ENCODE measurements at regions of chr2 and their contacts with region 1.

Region 1: DNA sequence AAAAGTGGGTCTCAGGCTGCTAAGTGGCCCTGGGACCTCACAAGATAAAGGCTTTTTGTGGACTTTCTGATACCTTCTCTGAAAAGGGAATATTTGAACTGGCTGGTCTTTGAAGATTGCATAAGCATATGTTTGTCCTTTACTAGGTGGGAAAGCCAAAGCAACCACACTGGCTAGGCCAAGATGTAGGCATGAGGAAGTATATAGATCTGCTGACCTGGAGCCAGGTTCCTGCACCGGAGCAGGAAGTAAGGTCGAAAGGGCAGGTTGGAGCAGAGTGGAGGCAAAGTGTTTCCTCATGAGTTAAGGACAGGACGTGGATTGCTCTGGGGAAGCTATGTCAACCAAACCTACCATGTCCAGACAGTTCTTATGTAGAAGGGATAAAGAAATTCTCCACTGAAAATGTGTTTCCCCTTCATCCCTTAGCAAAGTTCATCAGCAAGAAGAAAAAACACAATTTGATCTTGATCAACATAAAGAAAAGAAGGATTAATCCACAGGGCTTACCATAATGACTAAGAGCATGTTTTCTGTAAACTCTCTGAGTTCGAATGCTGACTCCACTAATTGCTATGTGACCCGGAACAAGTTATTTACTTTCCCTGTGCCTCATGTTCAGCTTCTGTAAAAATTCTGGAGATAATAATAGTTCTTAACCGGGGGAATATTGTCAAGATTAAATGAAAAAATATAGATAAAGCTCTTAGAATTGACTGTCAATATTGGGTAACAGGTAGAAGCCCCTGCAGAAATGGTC is 156.1 kb upstream of the SRD5A2 start:
- DNase-seq: no peak
- ATAC-seq: no peak
- H3K4me3 ChIP-seq: no peak overlapping the region
- H3K27ac ChIP-seq: no peak overlapping the region
- H3K4me1 ChIP-seq: no peaks in the 10 kb centered on the region
- H3K27me3 ChIP-seq: no peaks in the 10 kb centered on the region
- CTCF ChIP-seq: no peak

Region 2: GRCh38 chr2:31654241-31654640 is 82.6 kb before region 1 on chr2:
- CTCF ChIA-PET with region 1: no interaction called
- POLR2A ChIA-PET with region 1: no interaction called
- intact Hi-C with region 1: no loop called
- DNase-seq: no peak
- ATAC-seq: no peak
- H3K4me3 ChIP-seq: no peak overlapping the region
- H3K27ac ChIP-seq: no peak overlapping the region
- H3K4me1 ChIP-seq: no peaks in the 10 kb centered on the region
- H3K27me3 ChIP-seq: peaks cover 60% of the 10 kb centered on the region
- CTCF ChIP-seq: no peak

Region 3: DNA sequence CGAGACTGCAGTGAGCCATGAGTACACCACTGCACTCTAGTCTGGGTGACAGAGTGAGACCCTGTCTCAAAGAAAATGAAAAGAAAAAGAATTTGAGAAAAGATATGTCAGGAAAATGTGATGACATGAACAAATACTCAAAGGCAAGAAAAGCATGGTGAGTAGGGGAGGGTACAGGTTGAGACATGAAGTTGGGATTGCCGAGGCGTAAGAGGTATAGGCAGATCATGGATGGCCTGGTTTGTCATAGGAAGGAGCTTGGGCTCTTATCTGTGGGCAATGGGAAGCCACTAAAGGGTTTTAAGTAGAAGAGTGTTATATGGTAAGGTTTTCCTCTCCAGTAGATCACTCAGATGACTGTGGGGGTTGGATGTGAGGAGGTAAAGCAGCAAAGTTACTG is 358.8 kb after region 1 on chr2:
- CTCF ChIA-PET with region 1: no interaction called
- POLR2A ChIA-PET with region 1: interaction called, 14 read pairs
- intact Hi-C with region 1: no loop called
- DNase-seq: no peak
- ATAC-seq: no peak
- H3K4me3 ChIP-seq: no peak overlapping the region
- H3K27ac ChIP-seq: no peak overlapping the region
- H3K4me1 ChIP-seq: no peaks in the 10 kb centered on the region
- H3K27me3 ChIP-seq: no peaks in the 10 kb centered on the region
- CTCF ChIP-seq: no peak

Measured in PC-3 (cell line).